ENCODE measurements at regions of chr16 and their contacts with region 1.

Region 1: GRCh38 chr16:69150146-69150865 is 17.9 kb downstream of the UTP4 start:
- DNase-seq: no peak
- H3K4me3 ChIP-seq: no peak overlapping the region
- H3K27ac ChIP-seq: no peak overlapping the region
- H3K4me1 ChIP-seq: peaks cover 0 to 3% (median 0%) of the 10 kb centered on the region in 6 donors
- H3K27me3 ChIP-seq: no peaks in the 10 kb centered on the region
- CTCF ChIP-seq: peak; percentile 47 to 89 (median 80)
- POLR2A ChIP-seq: no peak

Region 2: GRCh38 chr16:69089091-69089910 is 61.0 kb before region 1 on chr16:
- intact Hi-C with region 1: no loop called
- DNase-seq: no peak
- H3K4me3 ChIP-seq: no peak overlapping the region
- H3K27ac ChIP-seq: no peak overlapping the region
- H3K4me1 ChIP-seq: no peaks in the 10 kb centered on the region
- H3K27me3 ChIP-seq: no peaks in the 10 kb centered on the region
- CTCF ChIP-seq: no peak
- POLR2A ChIP-seq: no peak

Region 3: DNA sequence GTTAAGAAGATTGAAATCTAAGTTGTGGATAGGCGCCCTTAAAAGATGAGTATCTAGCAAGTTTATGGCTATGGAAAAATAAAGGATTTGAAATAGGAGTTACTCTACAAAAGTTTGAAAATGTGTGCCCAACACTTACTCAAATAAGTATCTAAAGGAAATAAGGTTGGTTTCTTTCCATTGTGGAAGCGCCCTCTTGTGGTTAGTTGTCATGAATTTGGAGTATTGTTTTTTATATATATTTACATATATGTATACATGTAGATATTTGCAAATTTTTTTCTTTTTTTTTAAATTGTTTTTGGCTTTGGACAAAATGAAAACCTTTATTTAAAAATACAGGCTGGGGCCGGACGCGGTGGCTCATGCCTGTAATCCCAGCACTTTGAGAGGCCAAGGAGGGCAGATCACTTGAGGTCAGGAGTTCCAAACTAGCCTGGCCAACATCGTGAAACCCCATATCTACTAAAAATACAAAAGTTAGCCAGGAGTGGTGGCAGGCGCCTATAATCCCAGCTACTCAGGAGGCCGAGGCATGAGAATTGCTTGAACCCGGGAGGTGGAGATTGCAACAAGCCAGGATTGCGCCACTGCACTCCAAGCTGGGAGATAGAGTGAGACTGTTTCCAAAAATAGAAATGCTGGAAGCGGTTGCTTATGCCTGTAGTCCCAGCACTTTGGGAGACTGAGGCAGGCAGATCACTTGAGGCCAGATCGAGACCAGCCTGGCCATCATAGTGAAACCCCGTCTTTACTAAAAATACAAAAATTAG is 136.8 kb after region 1 on chr16:
- intact Hi-C with region 1: loop called (anchors 2 kb)
- DNase-seq: no peak
- H3K4me3 ChIP-seq: no peak overlapping the region
- H3K27ac ChIP-seq: no peak overlapping the region
- H3K4me1 ChIP-seq: peaks cover 0 to 16% (median 11%) of the 10 kb centered on the region in 6 donors
- H3K27me3 ChIP-seq: no peaks in the 10 kb centered on the region
- CTCF ChIP-seq: peak; percentile 31 to 74 (median 57)
- POLR2A ChIP-seq: no peak